ENCODE measurements at regions of chr12 and their contacts with region 1.

Region 1: GRCh38 chr12:32679091-32679919 is at the start of gene DNM1L:
- DNase-seq: peak; percentile 87 to 99
- H3K4me3 ChIP-seq: peak within 1 kb of the TSS; percentile 82
- H3K27ac ChIP-seq: peak within 1 kb of the TSS; percentile 71
- H3K4me1 ChIP-seq: peaks cover 26% of the 10 kb centered on the region
- H3K27me3 ChIP-seq: no peaks in the 10 kb centered on the region
- CTCF ChIP-seq: no peak
- total RNA-seq, gene DNM1L: 95.8 and 112 TPM in 2 replicates

Region 2: GRCh38 chr12:31659087-31659933 is 1020.0 kb before region 1 on chr12 and contains the start of gene ETFBKMT:
- CTCF ChIA-PET with region 1: no interaction called
- POLR2A ChIA-PET with region 1: no interaction called
- intact Hi-C with region 1: loop called (anchors 2 kb)
- DNase-seq: peak; percentile 94 to 97
- H3K4me3 ChIP-seq: peak within 1 kb of the TSS; percentile 62
- H3K27ac ChIP-seq: peak within 1 kb of the TSS; percentile 63
- H3K4me1 ChIP-seq: peaks cover 17% of the 10 kb centered on the region
- H3K27me3 ChIP-seq: no peaks in the 10 kb centered on the region
- CTCF ChIP-seq: peak; percentile 60
- total RNA-seq, gene ETFBKMT: 2.2 and 2.4 TPM in 2 replicates

Region 3: DNA sequence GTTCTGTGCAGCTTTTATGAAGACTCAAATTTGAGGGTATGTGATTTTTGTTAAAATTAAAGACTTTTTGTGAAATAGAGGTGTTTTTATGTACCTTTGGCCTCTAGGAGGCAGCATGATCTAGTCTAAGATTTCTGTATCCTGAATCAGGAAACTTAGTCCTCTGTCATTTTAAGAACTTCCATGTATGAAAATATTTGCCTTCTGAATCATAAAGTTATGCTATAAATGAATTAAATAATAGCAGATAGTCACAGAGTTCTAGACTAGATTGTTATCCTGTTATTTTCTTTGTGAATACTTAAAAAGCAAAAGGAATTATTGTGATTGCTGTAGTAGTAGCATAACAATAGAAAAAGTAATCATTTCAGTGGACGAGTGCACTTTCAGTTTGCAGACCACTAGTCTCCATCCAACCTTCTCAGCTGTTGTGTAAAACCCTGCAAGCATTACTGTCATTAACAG is 223.7 kb before region 1 on chr12:
- CTCF ChIA-PET with region 1: no interaction called
- POLR2A ChIA-PET with region 1: no interaction called
- intact Hi-C with region 1: loop called (anchors 2 kb)
- DNase-seq: peak; percentile 22 to 69
- H3K4me3 ChIP-seq: no peak overlapping the region
- H3K27ac ChIP-seq: no peak overlapping the region
- H3K4me1 ChIP-seq: peaks cover 34% of the 10 kb centered on the region
- H3K27me3 ChIP-seq: no peaks in the 10 kb centered on the region
- CTCF ChIP-seq: peak; percentile 83

Region 4: GRCh38 chr12:32659908-32660440 is 19.3 kb before region 1 on chr12:
- CTCF ChIA-PET with region 1: interaction called, 27 read pairs
- POLR2A ChIA-PET with region 1: no interaction called
- intact Hi-C with region 1: no loop called
- DNase-seq: no peak
- H3K4me3 ChIP-seq: no peak overlapping the region
- H3K27ac ChIP-seq: no peak overlapping the region
- H3K4me1 ChIP-seq: no peaks in the 10 kb centered on the region
- H3K27me3 ChIP-seq: no peaks in the 10 kb centered on the region
- CTCF ChIP-seq: no peak

Region 5: GRCh38 chr12:34022079-34022830 is 1343.0 kb after region 1 on chr12 and contains the start of gene ALG10:
- CTCF ChIA-PET with region 1: no interaction called
- POLR2A ChIA-PET with region 1: no interaction called
- intact Hi-C with region 1: loop called (anchors 5 kb)
- DNase-seq: peak; percentile 93 to 99
- H3K4me3 ChIP-seq: peak within 1 kb of the TSS; percentile 76
- H3K27ac ChIP-seq: peak within 1 kb of the TSS; percentile 49
- H3K4me1 ChIP-seq: peaks cover 19% of the 10 kb centered on the region
- H3K27me3 ChIP-seq: no peaks in the 10 kb centered on the region
- CTCF ChIP-seq: peak; percentile 86
- total RNA-seq, gene ALG10: 21.5 and 23.3 TPM in 2 replicates